B cell (primary cell): ENCODE measurements at regions of chr12 and their contacts with region 1.

Region 1: DNA sequence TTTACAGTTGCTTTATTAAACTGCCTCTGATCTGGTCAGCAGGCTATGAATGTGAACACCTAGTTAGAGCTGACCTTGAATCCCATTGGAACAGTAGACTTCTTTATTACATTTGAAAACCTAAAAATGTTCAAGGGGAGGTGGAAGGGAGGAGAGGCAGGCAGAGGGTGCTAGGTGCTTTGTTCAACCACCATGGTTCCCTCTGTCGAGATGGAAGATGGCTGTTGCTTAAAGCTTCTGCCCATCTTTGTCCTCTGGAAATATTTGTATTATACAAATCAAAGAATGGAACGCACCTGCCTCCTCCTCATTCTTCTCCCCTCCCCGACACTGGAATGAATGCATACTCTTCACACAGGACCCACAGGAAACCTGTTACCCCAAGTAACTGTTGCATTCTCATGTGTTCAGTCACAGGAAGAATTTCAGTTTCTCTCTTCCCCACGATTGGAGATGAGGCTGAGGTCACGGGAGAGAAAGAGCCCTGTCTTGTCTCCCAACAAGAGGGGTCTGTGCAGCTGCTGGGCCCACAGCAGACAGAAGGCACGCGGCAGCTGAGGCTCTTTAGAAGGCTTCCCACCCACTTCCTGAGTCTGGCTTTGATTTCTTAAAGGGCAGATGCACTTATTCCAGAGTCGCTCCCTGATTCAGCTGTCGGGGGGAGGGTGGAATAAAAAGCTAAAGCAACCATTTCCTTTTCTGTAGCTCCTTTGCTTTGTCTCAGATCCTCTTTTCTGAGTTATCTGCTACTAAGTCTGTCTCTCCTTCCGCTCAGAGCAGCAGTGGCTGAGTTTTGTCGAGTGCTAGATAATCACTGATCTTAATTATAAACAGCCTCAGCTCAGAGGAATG is 217.9 kb upstream of the BTG1 start:
- DNase-seq: peak; percentile 88
- ATAC-seq: peak; percentile 71
- H3K4me3 ChIP-seq: peak overlapping the region; percentile 12 to 57 (median 54)
- H3K4me3 Mint-ChIP-seq: peak overlapping the region; percentile 92
- H3K27ac ChIP-seq: peak overlapping the region; percentile 95 to 96
- H3K27ac Mint-ChIP-seq: peak overlapping the region; percentile 89
- H3K4me1 ChIP-seq: peaks cover 55 to 57% of the 10 kb centered on the region in 2 donors
- H3K4me1 Mint-ChIP-seq: peaks cover 73% of the 10 kb centered on the region
- H3K27me3 ChIP-seq: no peaks in the 10 kb centered on the region
- H3K27me3 Mint-ChIP-seq: no peaks in the 10 kb centered on the region
- CTCF ChIP-seq: no peak

Region 2: DNA sequence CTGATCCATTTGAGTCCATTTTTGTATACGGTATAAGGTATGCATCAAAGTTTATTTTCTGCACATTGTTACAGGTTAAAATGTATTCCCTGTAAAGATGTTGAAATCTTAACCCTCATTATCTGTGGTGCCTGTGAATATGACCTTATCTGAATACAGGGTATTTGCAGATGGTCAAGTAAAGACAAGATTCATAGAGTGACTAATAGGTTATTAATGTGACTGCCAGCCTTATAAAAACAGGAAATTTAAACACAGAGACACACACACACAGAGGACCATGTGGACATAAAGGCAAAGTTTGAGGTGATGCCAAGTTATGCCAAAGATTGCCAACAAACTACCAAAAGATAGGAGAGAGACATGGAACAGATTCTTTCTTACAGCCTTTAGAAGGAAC is 833.7 kb before region 1 on chr12:
- CTCF ChIA-PET with region 1: no interaction called
- POLR2A ChIA-PET with region 1: no interaction called
- intact Hi-C with region 1: no loop called
- DNase-seq: no peak
- ATAC-seq: no peak
- H3K4me3 ChIP-seq: no peak overlapping the region
- H3K4me3 Mint-ChIP-seq: no peak overlapping the region
- H3K27ac ChIP-seq: no peak overlapping the region
- H3K27ac Mint-ChIP-seq: no peak overlapping the region
- H3K4me1 ChIP-seq: no peaks in the 10 kb centered on the region
- H3K4me1 Mint-ChIP-seq: no peaks in the 10 kb centered on the region
- H3K27me3 ChIP-seq: no peaks in the 10 kb centered on the region
- H3K27me3 Mint-ChIP-seq: no peaks in the 10 kb centered on the region
- CTCF ChIP-seq: no peak

Region 3: DNA sequence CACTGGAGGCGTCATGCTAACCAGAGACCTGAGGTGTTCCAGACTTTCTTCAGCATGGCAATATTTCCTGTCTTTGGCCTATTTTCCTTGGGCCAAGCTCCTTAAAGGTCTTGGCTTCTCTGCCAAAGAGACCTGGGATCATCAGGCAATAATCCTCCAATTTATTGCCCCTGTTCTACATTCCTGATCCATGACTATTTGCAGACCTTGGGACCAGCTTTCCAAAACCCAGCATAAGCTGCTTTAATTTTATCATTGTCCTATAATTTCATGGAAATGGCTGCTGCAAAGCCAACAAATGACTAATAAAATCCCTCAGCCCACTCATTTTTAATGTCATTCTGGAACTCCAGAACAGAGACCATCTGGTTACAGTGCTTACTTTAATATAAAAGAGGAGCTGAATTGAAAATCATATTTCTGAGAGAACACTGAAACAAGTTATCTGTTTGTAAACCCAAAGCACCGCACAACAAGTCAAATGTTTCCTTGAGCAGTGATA is 51.0 kb before region 1 on chr12:
- CTCF ChIA-PET with region 1: no interaction called
- POLR2A ChIA-PET with region 1: no interaction called
- intact Hi-C with region 1: no loop called
- DNase-seq: no peak
- ATAC-seq: no peak
- H3K4me3 ChIP-seq: no peak overlapping the region
- H3K4me3 Mint-ChIP-seq: no peak overlapping the region
- H3K27ac ChIP-seq: no peak overlapping the region
- H3K27ac Mint-ChIP-seq: no peak overlapping the region
- H3K4me1 ChIP-seq: no peaks in the 10 kb centered on the region
- H3K4me1 Mint-ChIP-seq: peaks cover 5% of the 10 kb centered on the region
- H3K27me3 ChIP-seq: no peaks in the 10 kb centered on the region
- H3K27me3 Mint-ChIP-seq: no peaks in the 10 kb centered on the region
- CTCF ChIP-seq: no peak

Region 4: GRCh38 chr12:92324849-92325500 is 38.5 kb before region 1 on chr12:
- CTCF ChIA-PET with region 1: no interaction called
- POLR2A ChIA-PET with region 1: no interaction called
- intact Hi-C with region 1: loop called (anchors 5 kb)
- DNase-seq: no peak
- ATAC-seq: no peak
- H3K4me3 ChIP-seq: no peak overlapping the region
- H3K4me3 Mint-ChIP-seq: no peak overlapping the region
- H3K27ac ChIP-seq: no peak overlapping the region
- H3K27ac Mint-ChIP-seq: no peak overlapping the region
- H3K4me1 ChIP-seq: peaks cover 4 to 5% of the 10 kb centered on the region in 2 donors
- H3K4me1 Mint-ChIP-seq: peaks cover 28% of the 10 kb centered on the region
- H3K27me3 ChIP-seq: no peaks in the 10 kb centered on the region
- H3K27me3 Mint-ChIP-seq: no peaks in the 10 kb centered on the region
- CTCF ChIP-seq: no peak

Region 5: DNA sequence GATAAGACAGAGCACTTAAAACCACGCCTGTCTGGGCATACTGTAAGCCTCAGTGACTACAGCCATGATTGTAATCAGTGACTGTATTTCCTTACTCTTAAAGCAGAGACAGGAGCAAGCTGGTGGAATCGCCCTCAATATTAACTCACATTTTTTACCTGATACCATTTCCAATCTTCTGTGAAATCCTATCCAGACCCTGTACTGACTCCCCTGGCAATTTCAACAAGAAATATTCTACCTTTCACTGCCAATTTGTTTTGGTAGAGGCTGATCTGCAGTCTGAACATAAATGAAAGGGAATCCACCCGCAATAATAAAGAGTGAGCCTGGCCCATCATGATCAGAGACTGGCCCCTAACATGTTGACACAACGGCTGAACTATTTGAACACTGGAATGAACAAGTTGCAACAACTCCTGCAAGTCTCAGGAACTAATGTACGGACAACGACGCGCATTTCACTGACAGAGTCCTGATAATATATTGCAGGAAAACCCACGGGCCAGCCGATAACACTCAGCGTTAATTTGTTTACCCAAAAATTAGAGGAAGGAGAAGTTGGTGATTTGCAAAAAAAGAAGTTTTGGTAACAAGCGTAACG is 22.4 kb before region 1 on chr12:
- CTCF ChIA-PET with region 1: interaction called, 5 read pairs
- POLR2A ChIA-PET with region 1: interaction called, 3 read pairs
- intact Hi-C with region 1: loop called (anchors 2 kb)
- DNase-seq: peak; percentile 66
- ATAC-seq: peak; percentile 84
- H3K4me3 ChIP-seq: peak overlapping the region in 4 of 5 experiments; percentile 32 to 64 (median 56)
- H3K4me3 Mint-ChIP-seq: peak overlapping the region; percentile 93
- H3K27ac ChIP-seq: peak overlapping the region; percentile 66 to 91
- H3K27ac Mint-ChIP-seq: peak overlapping the region; percentile 94
- H3K4me1 ChIP-seq: peaks cover 19 to 27% of the 10 kb centered on the region in 2 donors
- H3K4me1 Mint-ChIP-seq: peaks cover 43% of the 10 kb centered on the region
- H3K27me3 ChIP-seq: no peaks in the 10 kb centered on the region
- H3K27me3 Mint-ChIP-seq: no peaks in the 10 kb centered on the region
- CTCF ChIP-seq: no peak

Region 6: DNA sequence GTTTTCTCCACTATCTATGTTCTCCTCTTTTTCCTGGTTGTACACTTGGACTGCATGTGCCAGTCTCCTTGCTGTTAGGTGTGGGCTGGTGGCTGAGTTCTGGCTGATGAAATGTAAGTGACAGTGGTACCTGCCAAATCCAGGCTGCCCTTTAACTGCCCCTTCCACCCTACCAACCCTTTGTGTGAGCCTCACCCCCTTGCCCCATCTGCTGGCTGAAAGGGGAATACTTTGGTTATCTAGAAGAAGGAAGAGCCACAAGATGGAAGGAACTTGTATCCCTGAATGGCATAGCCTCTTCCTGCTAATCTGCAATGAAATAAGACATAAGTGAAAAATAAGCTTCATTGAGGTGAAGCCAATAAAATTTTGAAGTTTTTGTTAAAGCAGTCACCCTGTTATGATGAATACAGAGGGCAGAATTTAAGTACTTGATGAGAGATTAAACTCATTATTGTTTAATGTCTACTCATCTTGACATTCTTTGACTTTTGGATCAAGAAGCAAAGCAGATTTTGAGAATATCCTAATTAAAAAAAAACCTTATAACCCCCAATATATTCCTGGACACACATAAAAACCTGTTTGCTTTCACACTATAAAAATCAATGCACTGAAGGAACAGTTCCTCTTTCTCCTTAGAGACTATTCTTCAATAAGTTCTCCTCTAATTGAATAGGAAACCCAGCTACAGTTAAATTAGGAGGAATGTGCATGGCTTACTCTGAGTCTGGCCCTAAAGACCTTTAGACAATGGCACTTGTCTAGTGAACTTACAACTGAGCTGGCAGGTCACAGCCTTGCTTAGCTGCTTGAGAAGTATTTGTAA is 44.8 kb after region 1 on chr12:
- CTCF ChIA-PET with region 1: interaction called, 26 read pairs
- POLR2A ChIA-PET with region 1: interaction called, 10 read pairs
- intact Hi-C with region 1: loop called (anchors 2 kb)
- DNase-seq: peak; percentile 74
- ATAC-seq: peak; percentile 49
- H3K4me3 ChIP-seq: no peak overlapping the region
- H3K4me3 Mint-ChIP-seq: peak overlapping the region; percentile 0
- H3K27ac ChIP-seq: peak overlapping the region; percentile 40 to 71
- H3K27ac Mint-ChIP-seq: peak overlapping the region; percentile 88
- H3K4me1 ChIP-seq: peaks cover 43% of the 10 kb centered on the region in 2 donors
- H3K4me1 Mint-ChIP-seq: peaks cover 67% of the 10 kb centered on the region
- H3K27me3 ChIP-seq: no peaks in the 10 kb centered on the region
- H3K27me3 Mint-ChIP-seq: no peaks in the 10 kb centered on the region
- CTCF ChIP-seq: peak; percentile 57

Region 7: GRCh38 chr12:92466391-92467305 is 103.1 kb after region 1 on chr12:
- CTCF ChIA-PET with region 1: no interaction called
- POLR2A ChIA-PET with region 1: interaction called, 3 read pairs
- intact Hi-C with region 1: loop called (anchors 1 kb)
- DNase-seq: peak; percentile 87
- ATAC-seq: peak; percentile 76
- H3K4me3 ChIP-seq: peak overlapping the region; percentile 61 to 93 (median 68)
- H3K4me3 Mint-ChIP-seq: peak overlapping the region; percentile 94
- H3K27ac ChIP-seq: peak overlapping the region; percentile 85 to 93
- H3K27ac Mint-ChIP-seq: peak overlapping the region; percentile 95
- H3K4me1 ChIP-seq: peaks cover 80 to 83% of the 10 kb centered on the region in 2 donors
- H3K4me1 Mint-ChIP-seq: peaks cover 81% of the 10 kb centered on the region
- H3K27me3 ChIP-seq: no peaks in the 10 kb centered on the region
- H3K27me3 Mint-ChIP-seq: no peaks in the 10 kb centered on the region
- CTCF ChIP-seq: no peak

Region 8: GRCh38 chr12:92593734-92594402 is 230.3 kb after region 1 on chr12:
- CTCF ChIA-PET with region 1: no interaction called
- POLR2A ChIA-PET with region 1: interaction called, 3 read pairs
- intact Hi-C with region 1: loop called (anchors 1 kb)
- DNase-seq: peak; percentile 94
- ATAC-seq: peak; percentile 93
- H3K4me3 ChIP-seq: peak overlapping the region in 2 of 5 experiments; percentile 20 to 22
- H3K4me3 Mint-ChIP-seq: peak overlapping the region; percentile 69
- H3K27ac ChIP-seq: peak overlapping the region; percentile 86 to 97
- H3K27ac Mint-ChIP-seq: peak overlapping the region; percentile 94
- H3K4me1 ChIP-seq: peaks cover 21 to 25% of the 10 kb centered on the region in 2 donors
- H3K4me1 Mint-ChIP-seq: peaks cover 34% of the 10 kb centered on the region
- H3K27me3 ChIP-seq: no peaks in the 10 kb centered on the region
- H3K27me3 Mint-ChIP-seq: no peaks in the 10 kb centered on the region
- CTCF ChIP-seq: no peak